ENCODE measurements at regions of chr5 and their contacts with region 1.

Region 1: GRCh38 chr5:83564069-83564749 is 92.7 kb downstream of the VCAN start:
- DNase-seq: no peak
- H3K4me3 ChIP-seq: no peak overlapping the region
- H3K27ac ChIP-seq: no peak overlapping the region
- H3K4me1 ChIP-seq: no peaks in the 10 kb centered on the region
- H3K27me3 ChIP-seq: no peaks in the 10 kb centered on the region
- CTCF ChIP-seq: peak; percentile 42 to 88 (median 74)
- POLR2A ChIP-seq: no peak

Region 2: DNA sequence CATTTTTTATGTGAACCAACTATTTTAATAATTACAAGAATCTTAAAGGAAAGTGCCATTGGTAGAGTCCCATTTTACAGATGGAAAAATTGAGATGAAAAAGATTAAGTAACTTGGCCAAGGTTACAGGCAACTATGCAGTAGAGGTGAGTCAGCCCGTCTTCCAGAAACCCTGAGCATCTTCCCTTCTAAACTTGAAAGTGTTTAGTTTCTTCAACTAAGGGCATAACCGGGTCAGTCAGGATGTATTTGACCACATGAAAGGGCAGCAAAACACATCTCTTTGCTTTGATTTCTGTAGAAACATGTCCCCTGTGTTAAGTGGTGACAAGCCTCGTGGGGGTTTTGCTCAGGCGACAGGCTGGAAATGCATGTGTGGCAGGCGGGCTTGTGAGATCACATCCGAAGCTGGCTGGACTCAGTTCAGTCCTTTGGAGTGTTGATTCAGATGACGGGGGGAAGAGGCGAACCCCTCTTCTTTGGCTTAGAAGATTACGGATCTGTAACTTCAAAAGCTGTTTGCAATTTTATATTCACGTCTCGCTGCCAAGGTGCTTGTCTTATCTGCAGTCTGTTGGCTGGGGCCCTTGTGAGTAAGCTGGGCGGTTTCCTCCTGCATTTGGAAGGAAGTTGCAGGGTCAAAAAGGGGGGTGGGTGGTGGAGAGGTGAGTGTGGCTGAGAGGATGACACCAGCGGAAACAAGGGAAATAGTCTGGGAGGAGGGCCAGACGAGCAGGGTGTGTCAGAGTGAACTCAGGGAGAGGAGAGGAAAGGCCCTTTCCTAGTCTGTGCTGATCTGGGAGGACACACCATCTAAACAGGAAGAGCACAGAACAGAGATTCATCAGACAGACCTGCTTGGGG is 1207.2 kb before region 1 on chr5:
- intact Hi-C with region 1: loop called (anchors 5 kb)
- DNase-seq: peak; percentile 70
- H3K4me3 ChIP-seq: no peak overlapping the region
- H3K27ac ChIP-seq: peak overlapping the region in 1 of 2 donors; percentile 37
- H3K4me1 ChIP-seq: no peaks in the 10 kb centered on the region
- H3K27me3 ChIP-seq: no peaks in the 10 kb centered on the region
- CTCF ChIP-seq: no peak
- POLR2A ChIP-seq: no peak

Region 3: DNA sequence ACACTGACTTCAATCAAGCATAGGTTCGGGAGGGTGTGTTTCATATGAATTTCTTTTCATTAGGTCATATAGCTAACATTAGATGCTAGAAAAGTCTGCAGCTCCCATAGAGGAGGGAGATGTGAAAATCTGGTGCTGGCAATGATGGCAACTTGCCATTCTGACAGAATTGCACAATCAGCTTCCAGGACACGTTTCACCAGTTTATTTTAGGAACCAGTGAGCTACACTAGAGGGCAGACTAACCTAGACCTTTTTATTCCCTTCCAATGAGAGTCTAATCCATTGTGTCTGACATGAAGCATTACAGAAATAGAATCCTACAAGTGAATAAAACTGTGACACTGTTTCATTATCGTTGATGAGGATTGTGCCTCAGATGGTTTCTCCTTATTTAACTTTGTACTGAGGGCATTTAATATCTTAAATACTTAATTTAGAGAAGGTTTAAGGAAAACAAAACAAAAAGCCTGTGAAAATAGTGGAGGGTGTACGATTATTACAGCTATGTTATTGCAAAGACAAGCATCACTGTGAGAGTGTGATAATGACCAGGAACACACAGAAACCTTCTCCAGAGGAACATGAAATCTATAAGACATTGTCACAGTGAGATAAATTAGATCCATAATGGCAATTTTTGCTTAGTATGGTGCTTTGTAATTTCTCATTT is 922.7 kb before region 1 on chr5:
- intact Hi-C with region 1: loop called (anchors 5 kb)
- DNase-seq: peak; percentile 79
- H3K4me3 ChIP-seq: no peak overlapping the region
- H3K27ac ChIP-seq: no peak overlapping the region
- H3K4me1 ChIP-seq: no peaks in the 10 kb centered on the region
- H3K27me3 ChIP-seq: no peaks in the 10 kb centered on the region
- CTCF ChIP-seq: peak in 3 of 4 experiments; percentile 78 to 82 (median 78)
- POLR2A ChIP-seq: no peak